HEK293T (cell line): ENCODE measurements at regions of chrX and their contacts with region 1.

Region 1: GRCh38 chrX:40175511-40176350 is 78.0 kb upstream of the BCOR start:
- DNase-seq: no peak

Region 2: DNA sequence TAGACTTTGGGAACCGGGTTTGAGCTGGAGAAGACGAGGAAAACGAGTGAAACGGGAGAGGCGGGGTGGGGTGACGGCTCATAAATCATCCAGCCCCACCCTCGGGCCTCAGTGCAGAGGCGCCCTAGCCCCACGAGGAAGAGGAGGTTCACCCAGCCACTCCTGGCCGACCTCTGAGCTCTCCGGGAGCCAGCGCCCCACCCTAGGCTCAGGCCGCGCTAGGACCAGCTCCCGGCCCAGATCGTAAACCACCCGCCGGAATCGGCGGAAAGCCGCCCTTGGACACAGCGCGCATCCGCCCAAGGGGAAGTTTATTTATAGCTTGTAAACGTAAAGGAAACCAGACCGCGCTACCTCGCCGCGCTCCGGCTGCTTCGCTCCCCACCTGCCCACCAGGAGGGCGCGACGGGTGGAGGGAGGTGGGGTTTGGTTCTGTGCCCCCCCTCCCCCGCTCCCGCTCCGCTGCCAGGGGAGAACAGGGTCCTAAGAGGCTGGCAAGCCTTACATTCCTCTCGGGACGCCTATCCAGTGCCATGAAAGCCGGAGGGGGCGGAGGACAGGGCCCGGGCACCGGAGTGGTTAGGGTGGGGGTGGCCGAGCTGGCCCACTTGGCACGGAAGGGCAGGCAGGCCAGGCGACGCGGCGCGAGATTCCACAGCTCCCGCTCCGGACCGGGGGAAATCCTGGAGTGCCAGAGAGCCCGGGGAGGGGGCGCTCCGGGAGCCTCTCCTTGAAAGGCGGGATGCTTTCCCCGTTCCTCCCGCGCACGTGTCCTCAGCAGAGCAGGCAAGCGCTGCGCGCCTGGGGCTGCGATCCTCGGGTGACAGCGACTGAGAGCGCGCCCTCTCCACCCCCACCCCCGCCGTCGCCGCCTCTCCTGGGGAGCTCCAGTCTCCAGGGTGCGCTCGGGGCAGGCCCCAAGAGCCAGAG is 162.2 kb before region 1 on chrX:
- CTCF ChIA-PET with region 1: no interaction called
- POLR2A ChIA-PET with region 1: interaction called, 10 read pairs
- DNase-seq: peak; percentile 55

Region 3: DNA sequence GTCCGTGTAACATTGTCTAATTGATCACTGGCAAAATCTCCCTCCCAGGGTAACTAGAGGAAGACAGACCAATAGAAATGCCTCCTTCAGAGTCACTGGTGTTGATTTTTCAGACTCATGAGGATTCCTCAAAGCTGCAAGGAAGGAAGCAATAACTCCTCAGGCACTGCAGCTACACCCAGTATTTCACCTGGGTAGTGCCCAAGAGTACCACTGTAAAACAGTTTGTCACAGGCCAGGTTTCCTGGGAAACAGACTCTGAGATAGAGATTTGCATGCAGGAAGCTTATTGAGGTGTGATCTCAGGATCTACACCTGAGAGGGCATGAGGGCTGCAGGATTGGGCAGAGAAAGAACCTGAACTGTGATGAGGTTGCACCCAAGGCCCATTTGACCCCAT is 164.4 kb after region 1 on chrX:
- CTCF ChIA-PET with region 1: no interaction called
- POLR2A ChIA-PET with region 1: no interaction called
- DNase-seq: no peak